Activated T-helper 1 cell treated with anti-CD3 and anti-CD28 coated beads, Interleukin-12 subunit alpha, Interleukin-12 subunit beta, Interleukin-2, Interleukin-4 antibody, amounts not matched to agents 30 ng/mL and 10 ng/mL and 1 ng/mL, durations not matched to agents 14 hours and 24 hours and 36 hours (primary cell): ENCODE measurements at regions of chr1 and their contacts with region 1.

Region 1: DNA sequence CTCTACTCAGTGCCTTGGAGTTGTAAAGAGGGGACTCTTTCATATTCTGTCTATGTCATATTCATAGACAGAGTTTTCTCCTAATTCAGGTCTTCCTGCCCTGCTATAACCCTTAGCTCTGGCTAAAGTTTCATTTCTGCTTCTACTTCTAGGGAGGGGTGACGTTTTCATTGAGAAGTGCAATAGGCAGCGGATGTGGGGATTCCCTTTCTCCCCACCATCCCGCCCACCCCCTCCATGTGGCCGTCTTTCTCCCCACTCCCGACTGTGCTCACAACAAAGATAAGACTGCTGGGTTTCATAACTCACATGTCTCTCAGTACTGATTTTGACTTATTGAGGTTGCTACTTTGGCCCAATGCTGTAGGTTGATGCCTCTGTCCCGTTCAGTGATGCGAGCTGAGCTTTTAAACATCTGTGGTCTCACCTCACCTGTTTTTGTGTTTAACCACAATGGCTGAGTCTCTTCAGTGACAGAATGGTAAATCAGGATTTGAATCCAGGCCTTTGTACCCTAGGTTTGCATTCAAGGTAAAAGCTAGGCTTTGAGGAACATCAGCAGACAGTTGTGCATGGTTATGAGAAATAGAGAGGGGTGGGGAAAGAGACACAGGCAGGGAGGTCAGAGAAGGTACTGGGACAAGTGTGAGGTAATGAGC is 7.8 kb upstream of the KIF14 start:
- DNase-seq: no peak
- H3K4me3 Mint-ChIP-seq: peak overlapping the region; percentile 32
- H3K27ac Mint-ChIP-seq: peak overlapping the region; percentile 42
- H3K4me1 Mint-ChIP-seq: peaks cover 45% of the 10 kb centered on the region
- H3K27me3 Mint-ChIP-seq: no peaks in the 10 kb centered on the region

Region 2: DNA sequence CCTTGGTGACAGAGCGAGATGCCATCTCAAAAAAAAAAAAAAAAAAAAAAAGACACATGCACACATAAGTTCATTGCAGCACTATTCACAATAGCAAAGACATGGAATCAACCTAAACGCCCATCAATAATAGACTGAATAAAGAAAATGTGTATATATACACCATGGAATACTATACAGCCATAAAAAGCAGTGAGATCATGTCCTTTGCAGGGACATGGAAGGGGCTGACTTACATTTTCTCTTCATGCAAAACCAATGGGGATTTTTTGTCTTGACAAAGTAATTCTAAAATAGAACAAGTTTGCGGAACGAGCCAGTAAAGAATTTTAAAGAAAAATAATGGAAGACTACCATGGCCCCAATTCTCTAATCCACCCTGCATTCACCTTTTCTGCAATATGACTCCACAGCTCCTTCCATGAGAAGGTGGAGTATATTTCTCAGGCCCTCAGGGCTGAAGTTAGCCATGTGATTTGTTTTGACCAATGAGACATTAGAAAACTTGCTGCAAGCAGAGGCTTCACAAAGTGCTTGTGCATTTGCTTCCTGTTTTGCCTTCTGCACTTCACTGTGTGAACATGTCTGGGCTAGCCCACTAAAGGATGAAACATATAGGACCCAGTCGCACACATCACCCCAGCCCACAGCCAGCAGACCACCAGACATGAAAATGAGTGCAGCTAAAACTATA is 679.6 kb before region 1 on chr1:
- intact Hi-C with region 1: loop called (anchors 5 kb)
- DNase-seq: no peak
- H3K4me3 Mint-ChIP-seq: no peak overlapping the region
- H3K27ac Mint-ChIP-seq: no peak overlapping the region
- H3K4me1 Mint-ChIP-seq: no peaks in the 10 kb centered on the region
- H3K27me3 Mint-ChIP-seq: peaks cover 50% of the 10 kb centered on the region

Region 3: DNA sequence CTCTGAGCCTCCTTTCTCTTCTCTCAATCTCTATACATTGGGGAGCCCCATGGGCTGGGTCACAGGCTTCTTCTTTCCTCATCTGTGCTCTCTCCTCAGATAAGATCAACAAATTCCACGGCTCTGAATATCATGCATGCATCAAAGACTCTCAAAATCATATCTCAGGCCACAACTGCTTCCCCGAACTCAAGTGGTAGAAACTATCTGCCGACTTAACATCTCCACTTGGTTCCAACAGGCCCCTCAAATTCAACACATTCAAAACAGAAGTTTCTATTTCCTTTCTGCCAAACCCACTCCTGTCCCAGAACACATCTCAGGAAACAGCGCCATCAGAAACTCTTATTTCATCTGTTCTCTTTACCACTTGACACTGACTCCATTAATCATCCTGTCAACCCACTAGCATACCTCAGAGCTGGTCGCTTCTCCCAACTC is 24.7 kb after region 1 on chr1:
- intact Hi-C with region 1: loop called (anchors 1 kb)
- DNase-seq: no peak
- H3K4me3 Mint-ChIP-seq: peak overlapping the region; percentile 11
- H3K27ac Mint-ChIP-seq: peak overlapping the region; percentile 47
- H3K4me1 Mint-ChIP-seq: peaks cover 28% of the 10 kb centered on the region
- H3K27me3 Mint-ChIP-seq: no peaks in the 10 kb centered on the region

Region 4: GRCh38 chr1:200738740-200739498 is 110.6 kb after region 1 on chr1 and contains the start of gene CAMSAP2:
- intact Hi-C with region 1: loop called (anchors 2 kb)
- DNase-seq: peak; percentile 52
- H3K4me3 Mint-ChIP-seq: peak within 1 kb of the TSS; percentile 91
- H3K27ac Mint-ChIP-seq: peak within 1 kb of the TSS; percentile 80
- H3K4me1 Mint-ChIP-seq: peaks cover 23% of the 10 kb centered on the region
- H3K27me3 Mint-ChIP-seq: peaks cover 40% of the 10 kb centered on the region
- total RNA-seq, gene CAMSAP2: 0.83 and 1.3 TPM in 2 replicates

Region 5: GRCh38 chr1:200888349-200888838 is 260.0 kb after region 1 on chr1:
- intact Hi-C with region 1: loop called (anchors 5 kb)
- DNase-seq: peak; percentile 52
- H3K4me3 Mint-ChIP-seq: no peak overlapping the region
- H3K27ac Mint-ChIP-seq: no peak overlapping the region
- H3K4me1 Mint-ChIP-seq: peaks cover 36% of the 10 kb centered on the region
- H3K27me3 Mint-ChIP-seq: peaks cover 50% of the 10 kb centered on the region